CD4-positive, alpha-beta T cell (primary cell): ENCODE measurements at regions of chr7 and their contacts with region 1.

Region 1: DNA sequence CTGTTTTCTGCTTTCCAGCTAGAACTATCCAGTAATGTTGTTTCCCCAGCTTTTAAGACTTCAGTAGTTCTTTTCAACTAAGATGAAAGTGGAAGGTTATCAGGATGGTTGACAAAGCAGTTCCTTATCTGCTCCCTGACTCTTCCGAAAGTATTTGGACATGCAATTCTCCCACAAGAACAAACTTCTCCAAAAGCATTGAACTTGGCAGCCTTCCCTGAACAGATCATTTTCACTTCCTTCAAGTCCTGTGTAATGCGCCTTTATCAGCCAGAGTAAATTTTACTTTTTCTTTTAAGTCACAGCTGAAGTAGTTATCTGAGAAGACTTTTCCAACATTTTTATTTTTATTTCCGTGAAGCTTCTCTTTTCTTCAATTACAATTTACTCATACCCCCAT is 39.7 kb downstream of the CDC14C start:
- DNase-seq: peak in 2 of 14 experiments; percentile 6 to 10
- ATAC-seq: no peak
- H3K4me3 ChIP-seq: no peak overlapping the region
- H3K4me3 Mint-ChIP-seq: no peak overlapping the region
- H3K27ac ChIP-seq: no peak overlapping the region
- H3K27ac Mint-ChIP-seq: no peak overlapping the region
- H3K4me1 ChIP-seq: no peaks in the 10 kb centered on the region
- H3K4me1 Mint-ChIP-seq: no peaks in the 10 kb centered on the region
- H3K27me3 ChIP-seq: no peaks in the 10 kb centered on the region
- H3K27me3 Mint-ChIP-seq: no peaks in the 10 kb centered on the region
- CTCF ChIP-seq: no peak

Region 2: GRCh38 chr7:48943279-48943990 is 20.6 kb before region 1 on chr7:
- CTCF ChIA-PET with region 1: no interaction called
- POLR2A ChIA-PET with region 1: no interaction called
- intact Hi-C with region 1: no loop called
- DNase-seq: no peak
- ATAC-seq: no peak
- H3K4me3 ChIP-seq: no peak overlapping the region
- H3K4me3 Mint-ChIP-seq: no peak overlapping the region
- H3K27ac ChIP-seq: no peak overlapping the region
- H3K27ac Mint-ChIP-seq: no peak overlapping the region
- H3K4me1 ChIP-seq: no peaks in the 10 kb centered on the region
- H3K4me1 Mint-ChIP-seq: no peaks in the 10 kb centered on the region
- H3K27me3 ChIP-seq: no peaks in the 10 kb centered on the region
- H3K27me3 Mint-ChIP-seq: no peaks in the 10 kb centered on the region
- CTCF ChIP-seq: no peak

Region 3: DNA sequence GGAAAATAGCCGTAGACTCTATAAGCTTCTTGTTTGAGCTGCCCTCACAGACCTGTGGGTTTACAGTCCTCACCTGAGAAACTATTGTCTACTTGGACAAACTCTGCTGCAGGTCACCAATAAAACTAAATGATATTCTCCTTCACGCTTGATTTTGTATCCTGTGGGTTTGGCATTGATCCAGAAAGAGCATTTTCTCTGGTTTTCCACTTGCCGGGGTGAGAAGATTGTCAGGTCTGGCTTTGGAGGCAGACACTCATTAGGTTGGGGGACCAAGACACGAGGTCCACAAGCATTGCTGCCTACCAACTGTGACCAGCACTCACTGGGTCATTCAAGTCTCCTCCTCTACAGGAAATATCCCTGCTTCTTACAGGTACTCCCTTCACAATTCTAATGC is 28.7 kb after region 1 on chr7:
- CTCF ChIA-PET with region 1: no interaction called
- POLR2A ChIA-PET with region 1: no interaction called
- intact Hi-C with region 1: no loop called
- DNase-seq: no peak
- ATAC-seq: no peak
- H3K4me3 ChIP-seq: no peak overlapping the region
- H3K4me3 Mint-ChIP-seq: no peak overlapping the region
- H3K27ac ChIP-seq: no peak overlapping the region
- H3K27ac Mint-ChIP-seq: no peak overlapping the region
- H3K4me1 ChIP-seq: no peaks in the 10 kb centered on the region
- H3K4me1 Mint-ChIP-seq: no peaks in the 10 kb centered on the region
- H3K27me3 ChIP-seq: no peaks in the 10 kb centered on the region
- H3K27me3 Mint-ChIP-seq: no peaks in the 10 kb centered on the region
- CTCF ChIP-seq: no peak

Region 4: GRCh38 chr7:49014870-49015269 is 50.8 kb after region 1 on chr7:
- CTCF ChIA-PET with region 1: no interaction called
- POLR2A ChIA-PET with region 1: no interaction called
- intact Hi-C with region 1: loop called in 1 of 2 experiments (anchors 5 kb)
- DNase-seq: no peak
- ATAC-seq: no peak
- H3K4me3 ChIP-seq: no peak overlapping the region
- H3K4me3 Mint-ChIP-seq: no peak overlapping the region
- H3K27ac ChIP-seq: no peak overlapping the region
- H3K27ac Mint-ChIP-seq: no peak overlapping the region
- H3K4me1 ChIP-seq: no peaks in the 10 kb centered on the region
- H3K4me1 Mint-ChIP-seq: no peaks in the 10 kb centered on the region
- H3K27me3 ChIP-seq: no peaks in the 10 kb centered on the region
- H3K27me3 Mint-ChIP-seq: no peaks in the 10 kb centered on the region
- CTCF ChIP-seq: no peak

Region 5: DNA sequence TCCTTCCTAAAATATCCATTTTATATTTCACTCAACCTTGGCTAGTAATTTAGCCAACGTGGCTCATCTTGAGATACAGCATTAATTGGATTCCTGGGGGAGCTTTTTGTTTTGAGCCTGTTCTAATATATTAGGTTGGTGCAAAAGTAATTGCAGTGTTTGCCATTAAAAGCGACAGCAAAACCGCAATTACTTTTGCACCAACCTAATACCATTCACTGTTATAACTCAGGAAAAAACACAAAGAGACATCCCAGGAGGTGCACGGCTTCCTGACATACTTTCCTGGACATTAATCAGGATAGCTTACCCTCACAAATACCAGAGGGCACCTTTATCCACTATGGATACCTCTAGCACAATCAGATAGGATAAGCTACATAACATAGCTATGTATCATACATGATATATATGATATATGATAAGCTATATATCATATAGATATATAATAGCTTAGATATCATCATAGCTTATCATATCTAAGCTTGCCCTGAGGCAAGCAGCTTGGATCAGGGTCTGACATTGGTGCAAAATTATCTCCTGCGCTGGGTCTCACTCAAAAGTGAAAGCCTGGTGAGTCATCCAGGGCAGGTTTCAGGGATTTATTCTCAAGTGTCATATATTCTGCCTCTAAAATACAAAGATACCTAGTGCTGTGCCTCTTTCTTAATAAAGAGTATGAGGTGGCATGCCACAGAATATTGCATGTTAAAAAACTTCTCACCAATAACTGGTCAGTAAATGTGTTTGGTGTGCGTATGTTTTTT is 66.0 kb after region 1 on chr7:
- CTCF ChIA-PET with region 1: no interaction called
- POLR2A ChIA-PET with region 1: no interaction called
- intact Hi-C with region 1: no loop called
- DNase-seq: no peak
- ATAC-seq: no peak
- H3K4me3 ChIP-seq: no peak overlapping the region
- H3K4me3 Mint-ChIP-seq: no peak overlapping the region
- H3K27ac ChIP-seq: no peak overlapping the region
- H3K27ac Mint-ChIP-seq: no peak overlapping the region
- H3K4me1 ChIP-seq: no peaks in the 10 kb centered on the region
- H3K4me1 Mint-ChIP-seq: no peaks in the 10 kb centered on the region
- H3K27me3 ChIP-seq: no peaks in the 10 kb centered on the region
- H3K27me3 Mint-ChIP-seq: no peaks in the 10 kb centered on the region
- CTCF ChIP-seq: no peak